ENCODE measurements at regions of chr9 and their contacts with region 1.

Region 1: DNA sequence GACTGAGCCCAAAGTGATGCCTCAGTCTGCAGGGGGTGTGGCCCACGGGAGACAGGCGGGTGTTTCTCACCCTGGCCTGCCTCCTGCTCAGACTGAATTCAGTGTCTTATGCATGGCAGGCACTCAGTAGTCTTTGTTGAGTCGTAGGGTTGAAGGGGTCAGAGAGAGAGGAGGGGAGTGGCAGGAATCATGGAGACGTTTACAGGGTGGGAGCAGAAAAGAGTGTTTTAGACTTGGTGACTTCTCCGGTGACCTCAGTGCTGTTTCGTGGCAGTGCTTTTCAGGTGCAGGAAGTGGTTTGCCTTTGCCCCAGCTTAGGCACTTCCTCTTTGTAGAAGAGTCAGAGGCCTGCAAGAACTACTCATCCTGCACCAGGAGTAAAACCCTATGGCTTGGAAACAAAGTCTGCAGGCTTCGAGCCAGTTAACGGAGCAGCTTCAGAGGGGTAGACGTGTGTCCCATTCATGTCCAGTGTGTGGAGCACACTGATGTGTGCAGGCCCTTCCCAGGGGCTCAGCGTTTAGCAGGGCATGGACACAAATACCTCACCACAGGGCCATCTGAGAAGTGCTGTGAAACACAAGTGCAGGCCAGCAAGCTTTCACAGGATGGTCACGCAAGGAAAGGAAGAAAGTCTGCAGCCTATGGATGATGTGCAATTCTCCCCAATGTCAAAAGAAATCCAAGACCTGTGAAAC is 24.5 kb upstream of the SEMA4D start:
- DNase-seq: peak; percentile 94
- H3K4me3 ChIP-seq: peak overlapping the region; percentile 54
- H3K27ac ChIP-seq: peak overlapping the region; percentile 82
- H3K4me1 ChIP-seq: peaks cover 73% of the 10 kb centered on the region
- CTCF ChIP-seq: no peak

Region 2: GRCh38 chr9:89318123-89319014 is 204.0 kb before region 1 on chr9 and contains the start of gene SECISBP2:
- CTCF ChIA-PET with region 1: no interaction called
- POLR2A ChIA-PET with region 1: interaction called, 11 read pairs
- intact Hi-C with region 1: no loop called
- DNase-seq: peak; percentile 95
- H3K4me3 ChIP-seq: peak within 1 kb of the TSS; percentile 77
- H3K27ac ChIP-seq: peak within 1 kb of the TSS; percentile 88
- H3K4me1 ChIP-seq: peaks cover 63% of the 10 kb centered on the region
- CTCF ChIP-seq: no peak
- total RNA-seq, gene SECISBP2: 76.1 and 77.6 TPM in 2 replicates

Region 3: DNA sequence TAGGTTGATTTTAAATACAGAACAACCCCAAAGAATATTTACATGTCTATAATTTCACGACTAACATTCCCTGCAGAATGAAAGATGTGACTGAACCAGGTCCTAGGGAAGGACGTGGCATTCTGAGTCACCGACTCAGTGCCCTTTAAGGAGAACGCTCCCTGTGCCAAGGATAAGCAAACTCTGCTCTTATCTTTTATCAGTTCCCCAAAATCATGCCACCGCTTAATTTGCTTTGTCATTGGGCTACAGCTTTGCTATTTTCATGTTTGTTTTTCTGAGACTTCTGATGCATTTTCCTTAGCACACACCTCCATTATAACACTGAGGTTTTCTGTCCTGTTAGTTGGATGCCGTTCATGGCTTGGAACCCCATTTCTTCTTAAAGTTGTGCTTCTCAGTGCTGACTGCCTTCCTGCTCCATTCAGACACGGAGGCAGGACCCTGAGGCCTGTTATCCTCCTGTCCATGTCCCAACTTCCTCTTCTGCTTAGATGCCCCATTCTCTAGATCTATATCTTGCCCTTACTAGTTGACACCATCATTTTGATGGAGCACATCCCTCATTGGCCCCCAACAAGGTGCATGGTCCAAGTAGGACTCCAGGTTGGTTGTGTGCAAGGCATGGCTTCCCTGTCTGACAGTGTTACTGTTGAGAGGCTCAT is 13.3 kb before region 1 on chr9:
- CTCF ChIA-PET with region 1: no interaction called
- POLR2A ChIA-PET with region 1: interaction called, 10 read pairs
- intact Hi-C with region 1: no loop called
- DNase-seq: no peak
- H3K4me3 ChIP-seq: no peak overlapping the region
- H3K27ac ChIP-seq: peak overlapping the region; percentile 76
- H3K4me1 ChIP-seq: peaks cover 59% of the 10 kb centered on the region
- CTCF ChIP-seq: no peak

Region 4: GRCh38 chr9:89542401-89543021 is 20.1 kb after region 1 on chr9:
- CTCF ChIA-PET with region 1: interaction called, 4 read pairs
- POLR2A ChIA-PET with region 1: interaction called, 28 read pairs
- intact Hi-C with region 1: loop called (anchors 1 kb)
- DNase-seq: peak; percentile 87
- H3K4me3 ChIP-seq: peak overlapping the region; percentile 44
- H3K27ac ChIP-seq: peak overlapping the region; percentile 85
- H3K4me1 ChIP-seq: peaks cover 41% of the 10 kb centered on the region
- CTCF ChIP-seq: no peak

Region 5: GRCh38 chr9:89961616-89962341 is 439.4 kb after region 1 on chr9:
- CTCF ChIA-PET with region 1: no interaction called
- POLR2A ChIA-PET with region 1: no interaction called
- intact Hi-C with region 1: no loop called
- DNase-seq: no peak
- H3K4me3 ChIP-seq: no peak overlapping the region
- H3K27ac ChIP-seq: no peak overlapping the region
- H3K4me1 ChIP-seq: no peaks in the 10 kb centered on the region
- CTCF ChIP-seq: no peak